WTC11 (cell line): ENCODE measurements at regions of chr9 and their contacts with region 1.

Region 1: DNA sequence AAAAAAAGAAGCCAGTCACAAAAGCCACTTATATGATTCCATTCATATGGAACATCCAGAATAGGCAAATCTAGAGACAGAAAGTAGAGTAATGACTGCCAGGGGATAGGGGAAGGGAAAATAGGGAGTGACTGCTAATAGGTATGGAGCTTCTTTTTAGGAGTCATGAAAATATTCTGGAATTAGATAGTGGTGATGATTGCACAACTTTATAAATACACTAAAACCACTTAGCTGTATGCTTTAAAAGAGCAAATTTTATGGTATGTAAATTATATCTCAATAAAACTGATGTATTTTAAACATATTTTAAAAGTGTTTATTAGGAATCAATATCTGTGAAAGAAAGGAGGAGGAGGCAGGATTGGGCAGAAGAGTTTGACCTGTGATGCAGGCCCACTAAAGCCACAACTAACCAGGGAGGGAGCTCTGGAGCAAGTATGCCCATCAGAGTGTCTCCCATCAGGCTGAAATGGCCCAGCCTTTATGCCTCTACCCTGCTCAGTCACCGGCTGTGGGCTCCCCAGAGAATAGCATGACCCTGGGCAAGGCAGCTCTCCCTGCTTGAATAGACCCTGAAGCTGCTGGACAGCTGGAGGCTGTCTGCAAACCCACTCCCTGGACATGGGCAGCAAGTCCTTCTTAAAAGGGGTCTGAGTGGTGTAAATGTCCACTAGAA is 96.0 kb upstream of the SLC44A1 start:
- DNase-seq: peak; percentile 48
- ATAC-seq: peak; percentile 100
- H3K4me3 Mint-ChIP-seq: no peak overlapping the region
- H3K27ac Mint-ChIP-seq: no peak overlapping the region
- H3K4me1 Mint-ChIP-seq: peaks cover 9% of the 10 kb centered on the region
- H3K27me3 Mint-ChIP-seq: no peaks in the 10 kb centered on the region; the same call in 1 of the 2 replicates
- CTCF ChIP-seq: no peak

Region 2: DNA sequence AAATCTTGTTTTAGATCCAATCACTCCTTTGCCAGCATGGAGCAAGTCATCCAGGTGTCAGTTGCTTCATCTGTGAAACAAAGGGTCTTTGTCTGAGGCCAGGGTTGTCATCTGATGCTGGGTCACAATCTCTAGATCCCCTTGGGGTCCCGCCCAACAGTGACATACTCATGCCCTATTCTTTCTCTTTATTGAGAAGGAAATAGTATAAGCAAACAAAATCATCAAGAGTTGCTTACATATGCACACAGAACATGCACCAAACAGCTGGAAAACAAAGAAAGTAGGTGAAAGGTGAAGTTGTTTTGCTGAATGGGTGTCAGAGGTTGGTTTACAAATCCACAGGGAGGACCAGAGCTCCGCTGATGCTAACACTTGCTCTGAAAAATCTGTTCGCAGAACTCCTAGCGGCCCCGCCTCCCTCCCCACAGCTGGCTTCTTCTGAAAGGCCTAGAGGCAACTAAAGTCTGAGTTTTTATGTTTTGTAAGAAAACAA is 10.1 kb before region 1 on chr9:
- CTCF ChIA-PET with region 1: interaction called, 13 read pairs
- POLR2A ChIA-PET with region 1: no interaction called
- DNase-seq: peak; percentile 42
- ATAC-seq: peak; percentile 82
- H3K4me3 Mint-ChIP-seq: peak overlapping the region; percentile 50
- H3K27ac Mint-ChIP-seq: peak overlapping the region; percentile 95
- H3K4me1 Mint-ChIP-seq: peaks cover 34% of the 10 kb centered on the region
- H3K27me3 Mint-ChIP-seq: peaks cover 13% of the 10 kb centered on the region
- CTCF ChIP-seq: no peak